BJ (cell line): ENCODE measurements at regions of chr3 and their contacts with region 1.

Region 1: GRCh38 chr3:134464064-134464697 is 21.6 kb downstream of the ANAPC13 start:
- DNase-seq: peak; percentile 100
- H3K4me3 ChIP-seq: no peak overlapping the region
- H3K27me3 ChIP-seq: no peaks in the 10 kb centered on the region
- CTCF ChIP-seq: no peak

Region 2: GRCh38 chr3:134364061-134364935 is 99.9 kb before region 1 on chr3:
- CTCF ChIA-PET with region 1: no interaction called
- POLR2A ChIA-PET with region 1: interaction called, 24 read pairs
- DNase-seq: peak; percentile 89
- H3K4me3 ChIP-seq: peak overlapping the region; percentile 24
- H3K27me3 ChIP-seq: no peaks in the 10 kb centered on the region
- CTCF ChIP-seq: no peak